ENCODE measurements at regions of chr15 and their contacts with region 1.

Region 1: DNA sequence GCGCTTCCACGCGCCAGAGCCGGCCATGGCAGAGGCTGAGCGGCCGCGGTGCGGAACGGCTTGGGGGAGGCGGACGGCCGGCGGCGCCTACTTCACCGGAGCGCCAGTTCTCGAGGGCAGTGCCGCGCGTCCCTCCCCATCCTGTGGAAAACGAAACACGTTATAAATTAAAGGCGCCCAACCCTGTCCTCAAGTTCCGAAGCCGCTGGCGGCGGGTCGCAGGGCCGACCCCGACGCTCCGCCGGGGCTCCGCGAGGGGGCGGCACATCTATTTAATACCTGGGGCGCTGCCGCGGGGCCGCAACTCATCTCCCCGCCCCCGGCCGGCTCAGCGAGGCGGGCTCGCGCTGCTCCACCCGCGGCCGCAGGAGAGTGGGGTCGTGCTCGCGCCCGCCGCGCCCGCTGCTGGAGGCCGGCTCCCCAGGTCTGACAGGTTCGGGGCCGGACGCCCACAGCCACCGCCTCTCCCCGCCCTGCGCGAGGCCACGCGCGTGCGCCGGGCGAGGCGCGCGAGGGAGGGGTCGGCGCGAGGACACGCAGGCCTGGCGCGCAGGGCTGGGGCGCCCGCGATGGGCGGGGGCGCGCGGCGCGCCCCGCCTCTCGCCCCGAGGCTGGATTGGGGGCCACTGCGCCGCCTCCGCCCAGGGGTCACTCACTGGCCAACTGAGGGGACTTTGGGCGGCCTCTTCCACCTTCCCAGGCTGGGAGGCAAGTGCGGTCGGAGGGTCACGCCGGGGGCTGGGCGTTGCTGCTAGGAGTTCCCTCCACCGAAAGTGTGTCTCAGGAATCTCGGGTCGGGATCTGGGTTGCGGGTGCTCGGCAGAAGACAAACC is at the start of gene SLC30A4:
- DNase-seq: peak; percentile 68 to 75 (median 69)
- H3K4me3 ChIP-seq: peak within 1 kb of the TSS; percentile 62 to 82
- H3K4me3 Mint-ChIP-seq: peak within 1 kb of the TSS; percentile 87 to 96 (median 94)
- H3K27ac ChIP-seq: peak within 1 kb of the TSS; percentile 54
- H3K27ac Mint-ChIP-seq: peak within 1 kb of the TSS; percentile 36 to 93 (median 88)
- H3K4me1 ChIP-seq: peaks cover 15% of the 10 kb centered on the region
- H3K4me1 Mint-ChIP-seq: peaks cover 18 to 28% (median 21%) of the 10 kb centered on the region in 4 donors
- H3K27me3 ChIP-seq: no peaks in the 10 kb centered on the region
- H3K27me3 Mint-ChIP-seq: no peaks in the 10 kb centered on the region
- total RNA-seq, gene SLC30A4: 3.6 to 3.8 TPM

Region 2: GRCh38 chr15:45634442-45635190 is 112.1 kb after region 1 on chr15 and contains the start of gene SQOR:
- CTCF ChIA-PET with region 1: no interaction called
- POLR2A ChIA-PET with region 1: interaction called, 5 read pairs
- intact Hi-C with region 1: loop called (anchors 1 kb)
- DNase-seq: peak; percentile 63 to 71 (median 67)
- H3K4me3 ChIP-seq: peak within 1 kb of the TSS; percentile 76 to 90
- H3K4me3 Mint-ChIP-seq: peak within 1 kb of the TSS; percentile 88 to 99 (median 98)
- H3K27ac ChIP-seq: peak within 1 kb of the TSS; percentile 67
- H3K27ac Mint-ChIP-seq: peak within 1 kb of the TSS; percentile 90 to 96 (median 95)
- H3K4me1 ChIP-seq: peaks cover 45% of the 10 kb centered on the region
- H3K4me1 Mint-ChIP-seq: peaks cover 26 to 53% (median 41%) of the 10 kb centered on the region in 4 donors
- H3K27me3 ChIP-seq: no peaks in the 10 kb centered on the region
- H3K27me3 Mint-ChIP-seq: no peaks in the 10 kb centered on the region
- total RNA-seq, gene SQOR: 47.9 to 51.0 TPM